Dorsolateral prefrontal cortex (tissue), 120 donors: ENCODE measurements at regions of chr10 and their contacts with region 1.

Region 1: GRCh38 chr10:59808896-59809643 is 55.8 kb upstream of the MRLN start:
- DNase-seq: peak; percentile 61 to 88 (median 74)
- H3K4me3 ChIP-seq: peak overlapping the region in 3 of 59 donors; percentile 5 to 24 (median 13)
- H3K27ac ChIP-seq: peak overlapping the region in 6 of 59 donors; percentile 6 to 68 (median 12)
- H3K27me3 ChIP-seq: no peaks in the 10 kb centered on the region
- CTCF ChIP-seq: peak; percentile 24 to 80 (median 68)

Region 2: GRCh38 chr10:59709395-59710125 is 99.5 kb before region 1 on chr10 and contains the start of gene SLC16A9:
- intact Hi-C with region 1: loop called in 1 of 2 experiments (anchors 10 kb)
- DNase-seq: peak in 7 of 10 donors; percentile 22 to 77 (median 60)
- H3K4me3 ChIP-seq: peak within 1 kb of the TSS; percentile 55 to 83 (median 72)
- H3K27ac ChIP-seq: peak within 1 kb of the TSS in 40 of 59 donors; percentile 5 to 81 (median 58)
- H3K27me3 ChIP-seq: peaks cover 0 to 13% (median 0%) of the 10 kb centered on the region in 45 donors
- CTCF ChIP-seq: peak in 31 of 56 donors; percentile 6 to 38 (median 25)
- total RNA-seq, gene SLC16A9: 2.4 to 32.3 (median 10.7) TPM

Region 3: DNA sequence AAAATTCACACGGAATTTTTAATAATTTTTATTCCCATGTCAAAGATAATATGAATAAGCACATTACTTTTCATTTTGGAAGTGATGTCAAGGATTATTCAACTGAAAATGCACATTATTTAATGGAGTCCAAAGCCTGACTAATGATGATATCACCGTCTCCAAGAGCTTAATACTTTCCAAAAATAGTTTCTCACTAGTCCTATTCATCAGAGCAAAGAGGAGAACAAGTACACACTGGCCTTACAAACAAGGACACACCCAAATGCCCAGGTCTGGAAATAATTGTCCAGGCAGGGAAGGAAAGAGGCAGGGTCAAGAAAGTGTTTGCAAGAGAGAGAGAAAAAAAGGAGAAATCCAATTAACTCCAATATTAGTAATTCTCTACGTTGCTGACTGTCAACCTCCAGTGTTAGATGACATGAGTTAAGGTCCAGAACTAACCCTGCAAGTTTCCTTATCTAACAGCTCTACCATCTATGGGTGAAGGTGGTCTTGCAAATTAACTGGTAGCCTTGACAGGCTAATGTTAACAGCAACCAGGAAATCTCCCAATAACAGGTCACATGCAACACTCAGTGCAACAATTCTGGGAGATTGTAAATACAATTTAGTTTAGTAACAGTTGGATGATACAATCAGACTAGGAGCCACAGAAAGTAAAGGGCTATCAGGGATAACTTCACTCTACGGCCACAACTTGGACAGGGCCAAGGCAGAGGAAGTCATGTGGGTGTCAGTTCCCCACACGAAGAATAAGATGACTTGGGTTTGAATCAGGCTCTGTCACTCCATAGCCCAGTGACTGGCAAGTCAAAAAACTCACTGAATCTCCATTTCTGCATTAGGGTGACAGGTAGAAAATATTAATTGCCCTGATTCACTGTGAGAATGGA is 314.4 kb after region 1 on chr10:
- intact Hi-C with region 1: no loop called
- DNase-seq: no peak
- H3K4me3 ChIP-seq: no peak overlapping the region
- H3K27ac ChIP-seq: peak overlapping the region in 29 of 59 donors; percentile 1 to 71 (median 26)
- H3K27me3 ChIP-seq: no peaks in the 10 kb centered on the region
- CTCF ChIP-seq: no peak